ENCODE measurements at regions of chr16 and their contacts with region 1.

Region 1: GRCh38 chr16:234468-235305 is at the start of gene FAM234A:
- DNase-seq: peak; percentile 93 to 98 (median 97)
- ATAC-seq: peak; percentile 90
- H3K4me3 ChIP-seq: peak within 1 kb of the TSS; percentile 82
- H3K4me3 Mint-ChIP-seq: peak within 1 kb of the TSS; percentile 81 to 99 (median 96)
- H3K27ac ChIP-seq: peak within 1 kb of the TSS; percentile 99
- H3K27ac Mint-ChIP-seq: peak within 1 kb of the TSS; percentile 90 to 100 (median 99)
- H3K4me1 ChIP-seq: peaks cover 0 to 5% of the 10 kb centered on the region in 2 donors
- H3K4me1 Mint-ChIP-seq: peaks cover 7 to 25% (median 16%) of the 10 kb centered on the region in 7 donors
- H3K27me3 ChIP-seq: no peaks in the 10 kb centered on the region
- H3K27me3 Mint-ChIP-seq: peaks cover 0 to 3% (median 0%) of the 10 kb centered on the region in 5 donors
- total RNA-seq, gene FAM234A: 30.4 to 43.9 (median 32.9) TPM

Region 2: DNA sequence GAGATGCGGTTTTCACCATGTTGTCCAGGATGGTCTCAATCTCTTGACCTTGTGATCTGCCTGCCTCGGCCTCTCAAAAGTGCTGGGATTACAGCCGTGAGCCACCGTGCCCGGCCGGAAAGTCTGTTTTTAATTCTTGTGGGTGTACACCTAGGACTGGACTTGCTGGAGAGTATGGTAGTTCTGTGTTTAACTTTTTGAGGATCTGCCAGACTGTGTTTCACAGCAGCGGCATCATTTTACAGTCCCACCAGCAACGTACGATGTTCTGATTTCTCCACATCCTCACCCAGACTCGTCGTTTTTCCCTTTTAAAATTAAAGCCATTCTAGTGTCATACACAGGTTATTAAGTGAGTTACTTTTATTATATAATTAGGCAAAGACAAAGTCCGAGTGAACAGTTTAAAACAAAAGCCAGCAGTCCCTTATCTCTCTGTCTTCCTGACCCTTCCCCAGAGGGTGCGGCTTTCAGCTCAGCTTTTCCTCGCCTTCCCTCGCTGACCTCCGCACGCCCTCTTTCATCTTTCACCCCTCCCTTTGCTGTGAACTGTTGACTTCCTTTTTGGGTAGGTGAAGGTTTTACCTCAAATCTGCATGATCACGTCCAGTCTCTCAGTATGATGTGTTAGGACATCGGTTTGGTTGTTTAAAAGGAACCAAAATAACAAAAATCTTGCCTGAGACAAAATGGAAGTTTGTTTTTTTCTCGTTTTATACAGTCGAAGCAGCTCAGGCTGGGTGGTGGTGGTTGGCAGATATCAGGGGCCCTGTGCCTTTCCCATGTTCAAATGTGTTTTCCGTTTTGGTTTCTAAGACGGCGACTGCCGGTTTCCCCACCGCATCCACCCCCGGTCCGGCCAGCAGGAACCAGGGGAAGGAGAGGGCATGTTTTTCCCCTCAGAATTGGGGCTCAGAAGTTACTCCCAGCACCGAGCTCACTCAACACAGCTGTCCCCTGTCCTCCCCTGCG is 18.0 kb after region 1 on chr16:
- CTCF ChIA-PET with region 1: no interaction called
- POLR2A ChIA-PET with region 1: interaction called, 14 read pairs
- intact Hi-C with region 1: loop called (anchors 1 to 2 kb)
- DNase-seq: peak in 7 of 9 donors; percentile 13 to 56 (median 27)
- ATAC-seq: peak; percentile 61
- H3K4me3 ChIP-seq: peak overlapping the region; percentile 60
- H3K4me3 Mint-ChIP-seq: peak overlapping the region; percentile 81 to 93 (median 86)
- H3K27ac ChIP-seq: peak overlapping the region; percentile 72
- H3K27ac Mint-ChIP-seq: peak overlapping the region; percentile 83 to 98 (median 94)
- H3K4me1 ChIP-seq: peaks cover 9 to 20% of the 10 kb centered on the region in 2 donors
- H3K4me1 Mint-ChIP-seq: peaks cover 12 to 44% (median 28%) of the 10 kb centered on the region in 7 donors
- H3K27me3 ChIP-seq: no peaks in the 10 kb centered on the region
- H3K27me3 Mint-ChIP-seq: no peaks in the 10 kb centered on the region

Region 3: DNA sequence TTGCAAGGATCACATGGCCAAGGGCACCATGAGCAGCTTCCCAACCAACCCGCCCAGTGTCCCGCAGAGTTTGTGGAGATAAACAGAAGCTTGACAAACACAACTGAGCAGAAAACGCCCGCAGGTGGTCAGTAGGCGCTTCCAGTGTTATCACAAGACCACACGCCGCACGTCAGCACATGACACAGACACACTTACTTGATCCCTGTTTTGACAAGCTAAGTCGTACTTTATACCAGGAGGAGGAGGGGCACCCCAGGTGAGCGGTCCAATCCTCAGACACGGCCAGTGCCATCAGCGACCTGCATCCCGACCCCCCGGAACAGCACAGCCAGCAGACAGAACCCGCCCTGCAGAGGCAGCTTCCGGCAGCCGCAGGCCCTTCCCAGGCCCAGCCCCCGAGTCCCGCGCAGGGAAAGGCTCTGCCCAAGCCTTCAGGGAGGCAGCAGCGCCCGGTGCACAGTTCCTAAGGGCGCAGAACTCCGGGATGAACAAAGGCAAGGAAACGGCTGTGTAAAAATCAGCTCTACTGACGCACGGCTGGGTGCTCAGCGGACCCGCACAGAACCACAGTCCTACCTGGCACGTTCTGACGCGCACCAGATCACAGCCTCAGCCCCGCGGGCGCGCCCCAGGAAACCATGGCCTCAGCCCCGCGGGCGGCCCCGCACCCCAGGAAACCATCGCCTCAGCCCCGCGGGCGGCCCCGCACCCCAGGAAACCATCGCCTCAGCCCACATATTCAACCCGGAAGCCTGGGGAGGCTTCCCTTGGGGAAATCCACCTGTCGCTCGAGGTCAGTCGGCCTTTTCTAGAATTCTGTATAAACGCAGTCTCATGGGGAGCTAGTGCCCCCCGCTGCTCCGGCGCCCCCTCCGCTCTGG is 90.0 kb after region 1 on chr16:
- CTCF ChIA-PET with region 1: interaction called, 6 read pairs
- POLR2A ChIA-PET with region 1: interaction called, 3 read pairs
- intact Hi-C with region 1: loop called in 1 of 2 experiments (anchors 1 kb)
- DNase-seq: peak; percentile 68 to 94 (median 91)
- ATAC-seq: peak; percentile 88
- H3K4me3 ChIP-seq: peak overlapping the region; percentile 71
- H3K4me3 Mint-ChIP-seq: peak overlapping the region; percentile 73 to 90 (median 86)
- H3K27ac ChIP-seq: peak overlapping the region; percentile 92
- H3K27ac Mint-ChIP-seq: peak overlapping the region; percentile 66 to 99 (median 96)
- H3K4me1 ChIP-seq: peaks cover 50 to 51% of the 10 kb centered on the region in 2 donors
- H3K4me1 Mint-ChIP-seq: peaks cover 26 to 74% (median 53%) of the 10 kb centered on the region in 7 donors
- H3K27me3 ChIP-seq: no peaks in the 10 kb centered on the region
- H3K27me3 Mint-ChIP-seq: no peaks in the 10 kb centered on the region

Region 4: GRCh38 chr16:502179-502943 is 267.7 kb after region 1 on chr16:
- CTCF ChIA-PET with region 1: no interaction called
- POLR2A ChIA-PET with region 1: no interaction called
- intact Hi-C with region 1: no loop called
- DNase-seq: no peak
- ATAC-seq: no peak
- H3K4me3 ChIP-seq: no peak overlapping the region
- H3K4me3 Mint-ChIP-seq: no peak overlapping the region
- H3K27ac ChIP-seq: no peak overlapping the region
- H3K27ac Mint-ChIP-seq: peak overlapping the region in 1 of 9 donors; percentile 46
- H3K4me1 ChIP-seq: no peaks in the 10 kb centered on the region
- H3K4me1 Mint-ChIP-seq: no peaks in the 10 kb centered on the region
- H3K27me3 ChIP-seq: no peaks in the 10 kb centered on the region
- H3K27me3 Mint-ChIP-seq: no peaks in the 10 kb centered on the region

Region 5: GRCh38 chr16:527006-527753 is 292.5 kb after region 1 on chr16 and contains the start of gene CAPN15:
- CTCF ChIA-PET with region 1: no interaction called
- POLR2A ChIA-PET with region 1: no interaction called
- intact Hi-C with region 1: loop called in 1 of 2 experiments (anchors 5 kb)
- DNase-seq: peak; percentile 79 to 93 (median 89)
- ATAC-seq: peak; percentile 91
- H3K4me3 ChIP-seq: peak within 1 kb of the TSS; percentile 78
- H3K4me3 Mint-ChIP-seq: peak within 1 kb of the TSS; percentile 83 to 93 (median 88)
- H3K27ac ChIP-seq: peak within 1 kb of the TSS; percentile 97
- H3K27ac Mint-ChIP-seq: peak within 1 kb of the TSS; percentile 68 to 93 (median 83)
- H3K4me1 ChIP-seq: peaks cover 26 to 28% of the 10 kb centered on the region in 2 donors
- H3K4me1 Mint-ChIP-seq: peaks cover 21 to 38% (median 30%) of the 10 kb centered on the region in 7 donors
- H3K27me3 ChIP-seq: no peaks in the 10 kb centered on the region
- H3K27me3 Mint-ChIP-seq: no peaks in the 10 kb centered on the region
- total RNA-seq, gene CAPN15: 51.0 to 89.8 (median 55.6) TPM

Measured in naive thymus-derived CD4-positive, alpha-beta T cell (primary cell).